SK-N-SH (cell line): ENCODE measurements at regions of chr1 and their contacts with region 1.

Region 1: DNA sequence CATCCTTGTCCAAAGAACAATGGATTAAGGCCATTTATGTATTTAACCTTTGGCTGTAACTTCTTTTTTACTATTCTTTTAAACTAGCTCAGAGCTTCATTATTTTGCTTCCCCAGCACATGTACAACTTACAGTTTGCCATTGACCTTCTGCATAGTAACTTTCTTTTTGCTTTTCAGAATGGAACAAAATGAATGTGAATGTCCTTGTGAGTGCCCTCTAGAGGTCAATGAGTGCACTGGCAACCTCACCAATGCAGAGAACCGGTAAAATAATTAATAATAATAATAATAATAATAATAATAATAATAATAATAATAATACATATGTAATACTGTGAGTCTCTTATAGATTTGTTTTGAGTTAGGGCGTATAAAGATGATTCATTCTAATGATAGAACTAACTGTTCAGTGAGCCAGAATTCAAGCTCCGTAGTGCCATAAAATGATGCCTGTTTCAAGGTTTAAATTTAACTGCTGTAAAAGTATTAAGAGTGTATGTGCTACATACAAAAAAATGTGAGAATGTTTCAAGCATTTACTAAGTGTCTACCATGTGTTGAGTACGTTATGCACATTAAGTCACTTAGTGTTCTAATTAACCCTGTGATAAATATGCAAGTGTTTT is 69.0 kb upstream of the RAVER2 start:
- DNase-seq: peak; percentile 41
- H3K4me3 ChIP-seq: no peak overlapping the region
- H3K27ac ChIP-seq: no peak overlapping the region
- H3K4me1 ChIP-seq: no peaks in the 10 kb centered on the region; a peak in 1 of 4 replicates
- H3K27me3 ChIP-seq: no peaks in the 10 kb centered on the region
- CTCF ChIP-seq: peak; percentile 68
- EP300 ChIP-seq: no peak
- RAD21 ChIP-seq: peak; percentile 64

Region 2: DNA sequence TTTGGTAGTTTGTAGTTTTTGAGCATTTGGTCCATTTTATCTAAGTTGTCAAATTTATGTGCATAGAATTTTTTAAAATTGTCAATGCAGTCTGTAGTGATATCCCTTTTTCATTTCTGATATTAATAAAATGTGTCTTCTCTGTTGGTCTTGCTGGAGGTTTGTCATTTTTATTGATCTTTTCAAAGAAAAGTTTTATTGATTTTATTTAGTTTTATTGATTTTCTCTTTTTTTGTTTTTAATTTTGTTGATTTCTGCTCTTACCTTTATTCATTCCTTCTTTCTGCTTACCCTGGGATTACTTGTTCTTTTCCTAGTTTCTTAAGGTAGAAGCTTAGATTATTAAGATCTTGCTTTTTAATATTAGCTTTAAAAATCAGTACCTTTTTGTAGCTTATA is 1090.6 kb before region 1 on chr1:
- CTCF ChIA-PET with region 1: no interaction called
- POLR2A ChIA-PET with region 1: no interaction called
- DNase-seq: no peak
- H3K4me3 ChIP-seq: no peak overlapping the region
- H3K27ac ChIP-seq: no peak overlapping the region
- H3K4me1 ChIP-seq: no peaks in the 10 kb centered on the region
- H3K27me3 ChIP-seq: no peaks in the 10 kb centered on the region
- CTCF ChIP-seq: no peak
- EP300 ChIP-seq: no peak
- RAD21 ChIP-seq: no peak

Region 3: DNA sequence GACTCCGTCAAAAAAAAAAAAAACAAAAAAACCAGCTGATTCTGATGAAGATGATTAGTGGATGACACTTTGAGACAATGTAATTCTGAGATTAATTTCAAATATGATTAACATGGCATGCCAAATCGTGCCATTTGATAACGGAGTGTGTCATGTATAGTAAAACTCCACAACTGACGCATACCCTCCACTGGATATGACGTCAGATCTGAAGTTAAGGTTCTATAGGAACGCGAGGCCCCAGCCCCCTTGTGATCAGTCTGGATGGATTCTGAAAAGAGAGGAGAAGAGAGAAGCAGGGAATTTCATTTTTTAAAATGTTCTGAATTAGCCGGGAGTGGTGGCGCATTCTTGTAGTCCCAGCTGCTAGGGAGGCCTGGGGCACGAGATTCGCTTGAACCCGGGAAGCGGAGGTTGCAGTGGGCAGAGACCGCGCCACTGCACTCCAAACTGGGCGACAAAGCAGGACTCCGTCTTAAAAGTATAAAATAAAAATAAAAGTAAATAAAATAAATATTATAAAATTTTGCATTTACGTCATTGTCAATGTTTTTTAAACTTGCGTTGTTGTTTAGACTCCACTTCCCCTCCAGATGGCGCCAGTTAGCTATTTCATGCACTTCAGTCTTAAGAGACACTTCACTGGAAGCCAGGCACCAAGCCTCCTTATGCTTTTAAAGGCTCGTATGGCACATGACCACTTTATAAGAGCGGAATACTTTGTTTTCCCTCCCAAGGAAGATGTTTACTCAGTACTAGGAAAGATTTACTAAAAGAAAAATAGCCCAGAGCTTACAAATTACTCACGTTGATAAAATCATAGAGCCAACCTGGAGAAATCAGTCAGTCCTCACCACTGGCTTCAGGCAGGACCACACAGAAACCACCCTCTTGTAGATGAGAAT is 406.9 kb before region 1 on chr1:
- CTCF ChIA-PET with region 1: interaction called, 31 read pairs
- POLR2A ChIA-PET with region 1: no interaction called
- DNase-seq: peak; percentile 57
- H3K4me3 ChIP-seq: no peak overlapping the region
- H3K27ac ChIP-seq: peak overlapping the region in 1 of 2 experiments; percentile 8; a peak in 1 of 4 replicates
- H3K4me1 ChIP-seq: peaks cover 9% of the 10 kb centered on the region in 2 experiments; a peak in 2 of 4 replicates
- H3K27me3 ChIP-seq: no peaks in the 10 kb centered on the region; the same call in 1 of the 2 replicates
- CTCF ChIP-seq: peak; percentile 71
- EP300 ChIP-seq: no peak
- RAD21 ChIP-seq: peak; percentile 97

Region 4: GRCh38 chr1:64471218-64472039 is 204.4 kb before region 1 on chr1:
- CTCF ChIA-PET with region 1: interaction called, 11 read pairs
- POLR2A ChIA-PET with region 1: no interaction called
- DNase-seq: peak; percentile 85
- H3K4me3 ChIP-seq: peak overlapping the region; percentile 79 to 83
- H3K27ac ChIP-seq: peak overlapping the region in 1 of 2 experiments; percentile 87; a peak in 2 of 4 replicates
- H3K4me1 ChIP-seq: peaks cover 13 to 25% of the 10 kb centered on the region in 2 experiments
- H3K27me3 ChIP-seq: no peaks in the 10 kb centered on the region
- CTCF ChIP-seq: no peak
- EP300 ChIP-seq: no peak
- RAD21 ChIP-seq: no peak

Region 5: DNA sequence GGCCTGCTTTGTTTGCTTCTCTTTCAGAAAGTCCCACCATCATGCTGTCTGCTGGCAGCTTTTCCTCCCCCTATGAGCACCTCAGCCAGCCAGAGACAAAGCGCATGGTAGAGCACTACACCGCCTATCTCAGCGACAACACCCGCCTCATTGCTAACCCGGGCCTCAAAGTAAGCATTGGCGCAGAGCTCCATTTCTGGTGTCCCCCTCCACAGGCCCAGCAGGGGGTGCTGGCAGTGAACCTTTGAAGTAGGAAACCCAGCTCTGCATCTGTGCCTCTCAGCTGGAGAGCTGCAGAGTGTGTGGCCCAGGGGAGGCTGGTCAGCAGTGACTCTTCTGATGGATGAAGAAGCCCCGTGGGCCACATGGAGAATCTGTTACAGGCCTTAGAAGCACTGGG is 12.2 kb before region 1 on chr1:
- CTCF ChIA-PET with region 1: interaction called, 48 read pairs
- POLR2A ChIA-PET with region 1: no interaction called
- DNase-seq: peak; percentile 42
- H3K4me3 ChIP-seq: no peak overlapping the region
- H3K27ac ChIP-seq: no peak overlapping the region; a peak in 1 of 4 replicates
- H3K4me1 ChIP-seq: peaks cover 0 to 9% of the 10 kb centered on the region in 2 experiments; a peak in 2 of 4 replicates
- H3K27me3 ChIP-seq: no peaks in the 10 kb centered on the region
- CTCF ChIP-seq: peak; percentile 42
- EP300 ChIP-seq: no peak
- RAD21 ChIP-seq: peak; percentile 40; the same call in 1 of the 2 replicates

Region 6: DNA sequence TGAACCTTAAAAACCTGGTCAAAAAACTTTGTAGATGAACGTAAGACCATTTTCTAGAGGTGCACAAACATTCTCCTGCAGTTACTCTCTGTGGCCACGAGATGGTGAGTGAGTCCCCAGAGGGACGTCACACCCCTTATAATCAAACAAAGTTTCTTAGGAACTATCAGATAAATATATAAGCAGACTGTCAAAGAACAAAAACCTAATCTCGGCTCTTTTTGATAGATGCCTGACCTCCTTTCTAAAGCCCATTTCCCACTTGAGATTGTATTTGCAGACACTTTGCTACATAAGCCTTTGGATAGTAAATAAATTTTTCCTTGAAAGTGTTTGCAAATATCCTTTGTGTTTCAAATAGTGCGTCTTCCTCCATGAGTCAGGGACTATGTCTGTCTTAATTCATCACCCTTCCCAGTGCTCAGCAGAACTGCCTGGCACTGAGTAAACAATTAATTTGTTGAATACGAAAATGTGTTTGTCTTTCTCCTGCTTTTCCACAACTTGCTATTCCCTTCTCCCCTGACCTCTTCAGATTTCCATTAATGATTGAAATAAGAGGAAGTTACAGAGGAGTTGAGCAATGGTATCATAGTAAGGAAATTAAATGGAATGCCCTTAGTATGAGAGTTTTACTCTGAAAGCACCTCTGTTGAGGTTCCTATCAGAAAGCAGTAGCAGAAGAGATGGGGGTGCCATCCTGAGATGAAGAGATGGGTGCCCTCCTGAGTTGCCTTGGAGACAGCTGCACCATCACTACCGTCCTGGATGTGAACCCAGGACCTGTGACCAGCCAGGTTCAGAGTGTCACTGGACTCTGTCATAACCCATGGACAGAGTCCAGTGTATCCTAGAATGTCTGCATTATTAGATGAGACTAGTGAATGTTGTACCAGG is 11.2 kb after region 1 on chr1:
- CTCF ChIA-PET with region 1: interaction called, 18 read pairs
- POLR2A ChIA-PET with region 1: no interaction called
- DNase-seq: peak; percentile 49
- H3K4me3 ChIP-seq: no peak overlapping the region
- H3K27ac ChIP-seq: 0 out of 4 replicates have a peak overlapping the region, but pooled peaks of 1 of the 2 experiments have one; percentile 6
- H3K4me1 ChIP-seq: peaks cover 0 to 25% of the 10 kb centered on the region in 2 experiments; a peak in 3 of 4 replicates
- H3K27me3 ChIP-seq: no peaks in the 10 kb centered on the region
- CTCF ChIP-seq: peak; percentile 88
- EP300 ChIP-seq: no peak
- RAD21 ChIP-seq: peak; percentile 74